PC-9 (cell line): ENCODE measurements at regions of chr7 and their contacts with region 1.

Region 1: DNA sequence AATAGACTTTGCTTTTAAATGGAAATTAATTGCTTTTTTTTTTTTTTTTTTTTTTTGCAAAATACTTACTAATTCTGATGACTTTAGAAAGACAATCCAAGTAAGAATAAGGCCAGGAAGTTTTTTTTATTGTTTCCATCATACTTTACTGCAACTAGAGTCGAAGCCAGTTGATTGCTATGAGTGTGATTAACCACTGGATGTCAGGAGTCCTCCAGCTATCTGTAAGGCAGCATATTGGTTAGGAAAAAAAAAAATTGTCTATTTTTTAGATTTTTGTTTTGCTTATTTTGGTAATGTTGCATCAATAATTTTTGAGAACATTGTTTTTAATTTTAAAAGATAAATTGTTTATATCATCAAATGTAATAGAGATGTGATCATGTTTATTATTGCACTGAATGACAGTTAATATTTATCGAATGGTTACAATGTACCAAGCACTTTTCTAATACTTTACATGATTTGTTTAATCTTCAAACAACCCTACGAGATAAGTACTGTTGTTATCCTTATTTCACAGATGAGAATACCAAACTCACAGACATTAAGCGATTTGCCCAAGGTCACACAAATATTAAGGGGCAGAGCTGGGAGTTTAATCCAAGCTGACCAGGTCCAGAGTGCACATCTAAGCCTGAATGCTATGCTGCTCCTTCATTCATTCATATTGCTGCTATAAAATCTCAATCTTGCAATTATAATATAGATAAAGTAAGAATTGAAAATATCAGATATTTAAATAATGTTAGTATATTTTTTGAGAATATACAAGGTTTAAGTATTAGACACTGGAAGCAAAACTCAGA is 19.9 kb upstream of the LMOD2 start:
- DNase-seq: no peak
- H3K4me3 ChIP-seq: no peak overlapping the region
- H3K27ac ChIP-seq: no peak overlapping the region
- H3K4me1 ChIP-seq: peaks cover 18% of the 10 kb centered on the region
- H3K27me3 ChIP-seq: no peaks in the 10 kb centered on the region
- CTCF ChIP-seq: peak; percentile 69

Region 2: GRCh38 chr7:123570401-123571182 is 65.2 kb before region 1 on chr7:
- CTCF ChIA-PET with region 1: no interaction called
- POLR2A ChIA-PET with region 1: no interaction called
- intact Hi-C with region 1: no loop called
- DNase-seq: peak in 1 of 2 experiments; percentile 43
- H3K4me3 ChIP-seq: no peak overlapping the region
- H3K27ac ChIP-seq: no peak overlapping the region
- H3K4me1 ChIP-seq: no peaks in the 10 kb centered on the region; the same call in 1 of the 2 replicates
- H3K27me3 ChIP-seq: no peaks in the 10 kb centered on the region
- CTCF ChIP-seq: no peak

Region 3: DNA sequence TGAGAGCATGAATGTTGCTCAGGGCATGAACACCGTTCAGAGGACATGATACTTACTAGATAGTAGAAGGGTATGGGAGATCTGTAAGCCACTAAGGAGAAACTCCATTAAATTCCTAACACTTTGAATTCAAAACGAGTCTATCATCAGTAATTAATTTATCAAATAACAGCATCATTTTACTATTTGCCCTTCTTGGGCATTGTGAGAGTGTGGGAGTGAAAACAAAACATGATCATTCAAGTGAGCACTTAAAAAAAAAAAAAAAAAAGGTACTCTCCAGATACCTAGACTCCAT is 54.6 kb before region 1 on chr7:
- CTCF ChIA-PET with region 1: no interaction called
- POLR2A ChIA-PET with region 1: no interaction called
- intact Hi-C with region 1: no loop called
- DNase-seq: no peak
- H3K4me3 ChIP-seq: no peak overlapping the region
- H3K27ac ChIP-seq: no peak overlapping the region
- H3K4me1 ChIP-seq: no peaks in the 10 kb centered on the region
- H3K27me3 ChIP-seq: no peaks in the 10 kb centered on the region
- CTCF ChIP-seq: peak; percentile 32; the same call in 1 of the 2 replicates

Region 4: DNA sequence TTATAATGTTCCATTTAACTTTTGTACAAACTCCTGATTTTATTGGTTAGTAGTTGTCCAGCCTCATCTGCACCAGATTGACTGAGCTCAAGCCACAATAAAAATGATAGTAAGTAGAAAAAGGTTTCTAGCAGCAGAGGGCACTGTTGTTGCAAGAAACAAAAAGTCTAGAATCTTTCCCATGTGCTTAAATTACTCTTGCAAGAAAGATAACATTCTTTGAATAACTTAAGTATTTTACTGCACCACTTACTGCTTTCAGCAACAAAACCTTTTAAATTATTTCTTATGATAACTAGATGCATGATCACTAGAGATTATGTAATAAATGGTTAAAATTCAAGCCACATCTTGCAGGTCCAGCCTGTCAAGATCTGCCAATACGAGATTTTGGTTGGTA is 46.9 kb after region 1 on chr7:
- CTCF ChIA-PET with region 1: no interaction called
- POLR2A ChIA-PET with region 1: no interaction called
- intact Hi-C with region 1: loop called (anchors 5 kb)
- DNase-seq: peak; percentile 27 to 67
- H3K4me3 ChIP-seq: no peak overlapping the region
- H3K27ac ChIP-seq: no peak overlapping the region
- H3K4me1 ChIP-seq: no peaks in the 10 kb centered on the region
- H3K27me3 ChIP-seq: no peaks in the 10 kb centered on the region
- CTCF ChIP-seq: peak; percentile 73

Region 5: DNA sequence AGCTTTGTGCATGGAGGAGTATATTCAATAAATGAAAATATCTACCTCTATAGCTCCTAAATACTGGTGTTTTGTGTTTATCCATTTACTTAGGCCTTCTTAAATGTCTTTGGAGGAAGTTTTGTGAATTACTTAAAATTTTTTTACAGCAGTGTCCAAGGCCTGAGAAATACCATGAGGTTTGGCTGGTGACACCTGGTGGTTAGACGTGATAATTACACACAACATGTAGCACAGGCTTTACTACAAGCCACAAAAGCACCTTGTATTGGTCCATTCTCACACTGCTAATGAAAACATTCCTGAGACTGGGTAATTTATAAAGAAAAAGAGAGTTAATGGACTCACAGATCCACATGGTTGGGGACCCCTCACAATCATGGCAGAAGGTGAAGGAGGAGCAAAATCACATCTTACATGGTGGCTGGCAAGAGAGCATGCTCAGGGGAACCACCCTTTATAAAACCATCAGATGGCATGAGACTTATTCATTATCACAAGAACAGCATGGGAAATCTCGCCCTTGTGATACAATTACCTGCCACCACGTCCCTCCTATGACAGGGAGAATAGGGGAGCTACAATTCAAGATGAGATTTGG is 229.9 kb after region 1 on chr7:
- CTCF ChIA-PET with region 1: interaction called, 3 read pairs
- POLR2A ChIA-PET with region 1: no interaction called
- intact Hi-C with region 1: loop called (anchors 1 kb)
- DNase-seq: peak; percentile 41 to 51
- H3K4me3 ChIP-seq: no peak overlapping the region
- H3K27ac ChIP-seq: no peak overlapping the region
- H3K4me1 ChIP-seq: peaks cover 6% of the 10 kb centered on the region; the same call in 1 of the 2 replicates
- H3K27me3 ChIP-seq: no peaks in the 10 kb centered on the region
- CTCF ChIP-seq: peak; percentile 87

Region 6: DNA sequence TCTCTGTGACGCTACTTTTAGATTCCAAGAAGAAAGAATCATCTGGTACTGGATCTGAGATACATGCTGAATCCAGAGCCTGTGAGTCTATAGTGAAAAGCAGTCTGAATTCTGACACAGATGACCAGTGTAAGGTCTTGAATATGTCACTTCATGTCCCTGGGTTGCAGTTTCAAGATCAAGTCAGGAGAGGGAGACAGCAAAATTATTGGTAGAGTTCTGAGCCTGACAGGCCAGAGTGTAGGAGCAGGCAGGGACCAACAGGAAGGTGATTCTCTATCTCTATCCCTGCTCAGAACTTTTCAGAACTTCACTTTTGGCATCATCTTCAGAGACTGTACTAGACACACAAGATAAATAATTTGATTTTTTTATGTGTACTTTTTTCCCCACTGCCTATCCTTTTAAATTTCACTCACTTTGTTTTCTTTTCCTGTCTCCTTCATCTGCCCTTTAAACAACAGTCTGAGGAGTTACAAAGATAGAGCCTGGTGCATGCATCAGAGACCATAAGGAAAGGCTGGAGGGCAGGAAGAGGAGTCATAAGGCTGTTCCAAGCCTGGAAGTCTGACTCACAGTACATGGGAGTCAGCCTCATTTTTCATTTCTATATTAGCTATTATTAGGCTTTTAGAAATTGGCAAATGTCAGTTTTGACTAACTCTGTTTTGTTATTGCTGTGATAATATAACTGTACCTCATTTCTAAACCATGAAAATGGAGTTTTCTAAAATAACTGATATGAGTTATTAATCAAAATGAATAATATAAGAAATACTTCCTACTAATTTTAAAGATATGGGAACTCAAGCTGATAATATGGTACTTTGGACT is 517.3 kb after region 1 on chr7:
- CTCF ChIA-PET with region 1: no interaction called
- POLR2A ChIA-PET with region 1: no interaction called
- intact Hi-C with region 1: loop called (anchors 10 kb)
- DNase-seq: peak in 1 of 2 experiments; percentile 14
- H3K4me3 ChIP-seq: no peak overlapping the region
- H3K27ac ChIP-seq: no peak overlapping the region
- H3K4me1 ChIP-seq: no peaks in the 10 kb centered on the region
- H3K27me3 ChIP-seq: no peaks in the 10 kb centered on the region
- CTCF ChIP-seq: peak; percentile 53